Endothelial cell of umbilical vein (primary cell): ENCODE measurements at regions of chr1 and their contacts with region 1.

Region 1: DNA sequence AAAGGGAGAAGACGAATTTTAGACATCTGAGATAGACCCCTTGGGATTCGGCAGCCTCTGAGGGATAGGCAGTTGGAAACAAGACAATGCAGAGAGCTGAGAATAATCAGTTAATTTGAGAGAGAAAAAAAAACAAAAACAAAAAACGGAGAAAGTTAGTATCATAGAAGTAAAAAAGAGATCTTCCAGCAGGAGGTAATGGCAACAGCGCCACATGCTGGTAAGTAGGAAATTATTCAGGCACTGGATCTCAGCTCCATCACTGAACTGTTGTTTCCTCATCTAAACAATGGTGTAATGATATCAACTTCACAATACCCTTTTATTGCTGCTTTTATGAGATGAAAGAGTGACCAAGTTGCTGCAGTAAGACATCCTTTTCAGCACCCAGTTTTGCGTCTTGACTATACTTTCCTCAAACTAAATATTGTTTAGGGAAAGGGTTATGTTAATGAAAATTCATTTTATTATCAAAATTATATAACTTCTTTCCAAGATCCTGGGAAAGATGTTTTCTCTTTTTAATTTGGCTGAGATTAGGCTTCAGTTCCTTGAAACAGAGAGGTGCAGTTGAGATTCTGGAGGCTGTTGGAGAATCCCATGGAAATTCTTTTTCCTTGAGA is 91.4 kb upstream of the KCNA3 start:
- DNase-seq: peak; percentile 50
- H3K4me3 ChIP-seq: no peak overlapping the region
- H3K27ac ChIP-seq: no peak overlapping the region
- H3K4me1 ChIP-seq: no peaks in the 10 kb centered on the region
- H3K27me3 ChIP-seq: no peaks in the 10 kb centered on the region
- CTCF ChIP-seq: peak; percentile 60 to 75
- POLR2A ChIP-seq: no peak

Region 2: DNA sequence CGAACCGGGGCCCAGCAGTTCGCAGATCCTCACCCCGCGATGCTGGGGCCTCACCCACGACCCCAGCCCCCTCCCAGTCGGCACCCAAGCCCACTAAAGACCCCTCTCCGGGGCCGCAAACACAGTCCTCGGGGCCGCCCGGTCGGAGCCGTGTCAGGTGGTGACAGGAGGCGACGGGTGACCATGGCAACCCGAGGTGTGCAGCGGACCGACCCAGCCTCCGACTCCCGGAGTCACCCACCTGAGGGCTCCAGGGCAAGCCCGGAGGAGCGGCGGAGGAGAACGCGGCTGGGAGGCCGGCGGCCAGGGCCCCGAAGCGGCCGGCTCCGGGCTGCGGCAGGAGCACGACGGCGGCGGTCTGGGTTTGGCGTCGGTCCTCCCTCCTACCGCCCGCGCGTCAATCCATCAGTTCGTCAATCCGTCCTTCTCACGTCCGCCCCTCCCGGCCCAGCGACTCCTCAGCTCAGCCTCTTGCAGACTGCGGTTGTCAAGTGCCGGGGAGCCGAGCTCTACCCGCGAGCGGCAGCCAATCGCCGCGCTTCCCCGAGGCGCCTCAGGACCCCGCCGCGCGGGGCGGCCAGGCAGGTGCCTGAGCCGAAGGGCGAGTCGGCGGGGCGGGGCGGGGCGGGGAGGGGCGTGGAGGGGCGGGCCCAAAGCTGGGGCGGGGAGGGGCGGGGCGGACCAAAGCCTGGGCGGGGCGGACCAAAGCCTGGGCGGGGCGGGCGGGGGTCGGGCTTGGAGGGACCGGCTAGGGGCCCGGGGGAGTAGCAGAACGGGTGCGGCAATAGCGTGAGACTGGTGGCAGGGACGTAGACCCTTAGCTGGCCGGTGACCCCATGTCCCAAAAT is 1724.3 kb before region 1 on chr1 and contains the start of gene WDR47:
- CTCF ChIA-PET with region 1: no interaction called
- POLR2A ChIA-PET with region 1: interaction called, 11 read pairs
- dilution Hi-C with region 1: no loop called
- intact Hi-C with region 1: no loop called
- DNase-seq: peak; percentile 94
- H3K4me3 ChIP-seq: peak within 1 kb of the TSS; percentile 92 to 96 (median 94)
- H3K27ac ChIP-seq: peak within 1 kb of the TSS; percentile 38
- H3K4me1 ChIP-seq: peaks cover 10% of the 10 kb centered on the region
- H3K27me3 ChIP-seq: no peaks in the 10 kb centered on the region
- CTCF ChIP-seq: no peak
- POLR2A ChIP-seq: peak; percentile 98
- total RNA-seq, gene WDR47: 18.2 and 19.0 TPM in 2 replicates

Region 3: GRCh38 chr1:110605901-110606656 is 160.1 kb before region 1 on chr1 and contains the start of gene KCNA2:
- CTCF ChIA-PET with region 1: interaction called, 10 read pairs
- POLR2A ChIA-PET with region 1: no interaction called
- dilution Hi-C with region 1: no loop called
- intact Hi-C with region 1: no loop called
- DNase-seq: peak; percentile 10
- H3K4me3 ChIP-seq: no peak within 1 kb of the TSS
- H3K27ac ChIP-seq: no peak within 1 kb of the TSS
- H3K4me1 ChIP-seq: no peaks in the 10 kb centered on the region
- H3K27me3 ChIP-seq: peaks cover 50 to 56% of the 10 kb centered on the region in 2 experiments
- CTCF ChIP-seq: peak in 1 of 2 donors; percentile 4
- POLR2A ChIP-seq: no peak
- total RNA-seq, gene KCNA2: not detected in 2 replicates

Region 4: GRCh38 chr1:110630839-110631663 is 135.1 kb before region 1 on chr1:
- CTCF ChIA-PET with region 1: interaction called, 30 read pairs
- POLR2A ChIA-PET with region 1: no interaction called
- dilution Hi-C with region 1: no loop called
- intact Hi-C with region 1: loop called (anchors 1 kb)
- DNase-seq: peak; percentile 46
- H3K4me3 ChIP-seq: no peak overlapping the region
- H3K27ac ChIP-seq: no peak overlapping the region
- H3K4me1 ChIP-seq: no peaks in the 10 kb centered on the region
- H3K27me3 ChIP-seq: peaks cover 0 to 2% of the 10 kb centered on the region in 2 experiments
- CTCF ChIP-seq: peak; percentile 69 to 85
- POLR2A ChIP-seq: no peak

Region 5: DNA sequence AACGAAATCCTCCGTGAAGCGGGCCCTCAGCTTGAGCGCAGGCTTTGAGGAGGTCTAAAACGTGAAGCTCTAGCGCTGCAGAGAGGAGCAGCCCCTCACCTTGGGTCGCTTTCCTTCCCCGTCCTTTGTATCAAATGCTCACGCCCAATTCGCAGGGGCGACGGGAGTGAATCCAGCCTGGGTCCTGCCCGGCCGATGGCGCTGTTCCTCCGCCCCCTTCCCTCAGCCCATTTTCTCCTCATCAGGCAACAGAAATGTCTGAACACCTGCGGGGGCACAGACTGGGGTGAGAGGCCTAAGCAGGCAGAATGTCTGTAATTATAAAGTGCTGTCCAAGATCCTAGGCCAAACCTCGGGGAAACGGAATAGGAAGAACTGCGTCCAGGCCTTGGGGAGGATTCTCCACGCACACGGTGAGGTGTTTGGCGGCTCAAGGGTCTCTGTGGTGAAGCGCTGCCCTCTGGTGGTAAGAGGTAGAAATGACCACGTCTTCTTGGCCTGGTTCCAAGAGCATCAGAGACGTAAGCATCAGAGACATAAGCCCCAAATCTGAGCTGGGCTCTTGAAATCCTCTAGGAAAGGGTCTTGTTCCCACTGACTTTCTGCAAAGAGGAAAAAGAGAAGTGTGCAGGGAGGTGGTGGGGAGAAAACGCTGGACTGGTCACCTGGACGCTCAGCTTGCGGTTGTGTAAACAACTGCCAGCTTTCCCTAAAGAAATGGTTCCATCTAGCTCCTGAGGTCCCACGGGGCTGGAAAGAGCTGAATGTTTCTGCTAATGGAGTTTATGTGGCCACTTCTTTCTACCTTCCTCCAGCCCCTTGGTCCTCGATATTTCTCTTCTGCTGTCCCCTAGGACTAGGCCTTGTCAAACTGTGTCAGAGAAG is 14.7 kb after region 1 on chr1:
- CTCF ChIA-PET with region 1: interaction called, 38 read pairs
- POLR2A ChIA-PET with region 1: no interaction called
- dilution Hi-C with region 1: no loop called
- intact Hi-C with region 1: loop called (anchors 1 kb)
- DNase-seq: peak; percentile 82
- H3K4me3 ChIP-seq: no peak overlapping the region
- H3K27ac ChIP-seq: no peak overlapping the region
- H3K4me1 ChIP-seq: no peaks in the 10 kb centered on the region
- H3K27me3 ChIP-seq: no peaks in the 10 kb centered on the region
- CTCF ChIP-seq: peak; percentile 69 to 86
- POLR2A ChIP-seq: no peak